Activated CD8-positive, alpha-beta T cell treated with anti-CD3 and anti-CD28 coated beads for 36 hours (primary cell): ENCODE measurements at regions of chr12 and their contacts with region 1.

Region 1: GRCh38 chr12:89542912-89543592 is 17.2 kb upstream of the POC1B start:
- DNase-seq: peak; percentile 80
- ATAC-seq: peak; percentile 86
- H3K4me3 Mint-ChIP-seq: no peak overlapping the region
- H3K27ac Mint-ChIP-seq: no peak overlapping the region
- H3K4me1 Mint-ChIP-seq: peaks cover 6% of the 10 kb centered on the region
- H3K27me3 Mint-ChIP-seq: no peaks in the 10 kb centered on the region
- CTCF ChIP-seq: peak; percentile 81

Region 2: DNA sequence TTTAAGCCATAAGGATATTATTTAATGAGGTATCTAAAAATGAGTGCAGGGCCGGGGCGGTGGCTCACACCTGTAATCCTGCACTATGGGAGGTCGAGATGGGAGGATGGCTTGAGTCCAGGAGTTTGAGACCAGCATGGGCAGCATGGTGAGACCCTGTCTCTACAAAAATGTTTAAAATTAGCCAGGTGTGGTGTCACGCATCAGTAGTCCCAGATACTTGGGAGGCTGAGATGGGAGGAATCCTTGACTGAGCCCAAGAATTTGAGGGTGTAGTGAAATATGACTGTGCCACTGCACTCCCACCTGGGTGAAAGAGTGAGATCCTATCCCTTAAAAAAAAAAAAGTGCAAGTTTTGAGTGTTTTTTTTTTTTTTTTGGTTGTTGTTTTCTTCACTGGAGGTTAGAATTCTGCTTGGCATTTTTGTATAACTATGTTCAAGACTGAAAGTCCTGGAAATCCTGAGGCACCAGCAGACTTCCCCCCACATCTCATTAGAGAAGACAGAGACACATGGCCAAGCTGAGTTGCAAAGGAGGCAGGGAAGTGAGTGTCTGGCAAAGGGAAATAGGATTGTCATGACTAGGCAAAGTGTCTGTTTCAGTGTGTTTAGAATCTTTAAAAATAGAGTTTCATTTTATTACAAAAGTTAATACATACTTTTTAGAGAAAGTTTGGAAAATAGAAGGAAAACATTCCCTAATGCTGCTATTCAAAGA is 137.3 kb before region 1 on chr12:
- CTCF ChIA-PET with region 1: no interaction called
- POLR2A ChIA-PET with region 1: no interaction called
- intact Hi-C with region 1: no loop called
- DNase-seq: no peak
- ATAC-seq: no peak
- H3K4me3 Mint-ChIP-seq: no peak overlapping the region
- H3K27ac Mint-ChIP-seq: no peak overlapping the region
- H3K4me1 Mint-ChIP-seq: no peaks in the 10 kb centered on the region
- H3K27me3 Mint-ChIP-seq: no peaks in the 10 kb centered on the region
- CTCF ChIP-seq: no peak

Region 3: GRCh38 chr12:89556976-89557375 is 13.9 kb after region 1 on chr12:
- CTCF ChIA-PET with region 1: interaction called, 18 read pairs
- POLR2A ChIA-PET with region 1: interaction called, 3 read pairs
- intact Hi-C with region 1: no loop called
- DNase-seq: no peak
- ATAC-seq: no peak
- H3K4me3 Mint-ChIP-seq: no peak overlapping the region
- H3K27ac Mint-ChIP-seq: no peak overlapping the region
- H3K4me1 Mint-ChIP-seq: peaks cover 3% of the 10 kb centered on the region
- H3K27me3 Mint-ChIP-seq: peaks cover 3% of the 10 kb centered on the region
- CTCF ChIP-seq: no peak

Region 4: GRCh38 chr12:89621521-89621920 is 78.5 kb after region 1 on chr12:
- CTCF ChIA-PET with region 1: interaction called, 14 read pairs
- POLR2A ChIA-PET with region 1: no interaction called
- intact Hi-C with region 1: no loop called
- DNase-seq: no peak
- ATAC-seq: no peak
- H3K4me3 Mint-ChIP-seq: no peak overlapping the region
- H3K27ac Mint-ChIP-seq: no peak overlapping the region
- H3K4me1 Mint-ChIP-seq: peaks cover 11% of the 10 kb centered on the region
- H3K27me3 Mint-ChIP-seq: no peaks in the 10 kb centered on the region
- CTCF ChIP-seq: no peak

Region 5: GRCh38 chr12:89709157-89709994 is 166.3 kb after region 1 on chr12:
- CTCF ChIA-PET with region 1: interaction called, 14 read pairs
- POLR2A ChIA-PET with region 1: no interaction called
- intact Hi-C with region 1: no loop called
- DNase-seq: peak; percentile 98
- ATAC-seq: peak; percentile 86
- H3K4me3 Mint-ChIP-seq: peak overlapping the region; percentile 82
- H3K27ac Mint-ChIP-seq: peak overlapping the region; percentile 81
- H3K4me1 Mint-ChIP-seq: peaks cover 31% of the 10 kb centered on the region
- H3K27me3 Mint-ChIP-seq: no peaks in the 10 kb centered on the region
- CTCF ChIP-seq: no peak

Region 6: DNA sequence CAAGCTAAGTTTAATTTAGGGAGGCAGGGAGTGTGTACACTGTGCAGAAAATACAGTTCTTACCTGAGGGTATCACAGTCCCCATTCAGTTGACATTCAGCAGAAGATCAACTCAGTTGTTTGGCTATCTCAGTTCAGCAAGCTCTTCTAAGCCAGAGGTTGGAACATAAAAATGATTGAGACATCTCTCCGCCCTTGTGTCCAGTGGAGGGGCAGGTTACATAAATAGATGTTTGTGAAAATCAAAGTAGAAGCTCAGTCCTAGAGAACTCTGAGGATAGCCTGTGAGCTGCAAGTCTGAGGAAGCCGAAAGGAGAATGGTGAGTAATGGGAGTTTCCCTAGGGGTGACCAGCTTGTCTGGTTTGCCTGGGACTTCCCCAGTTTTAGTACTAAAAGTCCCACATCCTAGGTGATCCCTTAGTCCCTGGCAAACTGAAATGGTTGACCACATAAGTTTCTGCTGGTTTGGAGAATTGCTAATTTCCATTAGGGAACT is 417.0 kb after region 1 on chr12:
- CTCF ChIA-PET with region 1: interaction called, 7 read pairs
- POLR2A ChIA-PET with region 1: no interaction called
- intact Hi-C with region 1: loop called (anchors 5 kb)
- DNase-seq: peak; percentile 47
- ATAC-seq: peak; percentile 93
- H3K4me3 Mint-ChIP-seq: no peak overlapping the region
- H3K27ac Mint-ChIP-seq: no peak overlapping the region
- H3K4me1 Mint-ChIP-seq: peaks cover 17% of the 10 kb centered on the region
- H3K27me3 Mint-ChIP-seq: no peaks in the 10 kb centered on the region
- CTCF ChIP-seq: no peak

Region 7: GRCh38 chr12:90102957-90103652 is 560.1 kb after region 1 on chr12:
- CTCF ChIA-PET with region 1: interaction called, 26 read pairs
- POLR2A ChIA-PET with region 1: no interaction called
- intact Hi-C with region 1: loop called (anchors 5 kb)
- DNase-seq: peak; percentile 39
- ATAC-seq: peak; percentile 71
- H3K4me3 Mint-ChIP-seq: no peak overlapping the region
- H3K27ac Mint-ChIP-seq: no peak overlapping the region
- H3K4me1 Mint-ChIP-seq: peaks cover 13% of the 10 kb centered on the region
- H3K27me3 Mint-ChIP-seq: peaks cover 2% of the 10 kb centered on the region
- CTCF ChIP-seq: peak; percentile 52

Region 8: DNA sequence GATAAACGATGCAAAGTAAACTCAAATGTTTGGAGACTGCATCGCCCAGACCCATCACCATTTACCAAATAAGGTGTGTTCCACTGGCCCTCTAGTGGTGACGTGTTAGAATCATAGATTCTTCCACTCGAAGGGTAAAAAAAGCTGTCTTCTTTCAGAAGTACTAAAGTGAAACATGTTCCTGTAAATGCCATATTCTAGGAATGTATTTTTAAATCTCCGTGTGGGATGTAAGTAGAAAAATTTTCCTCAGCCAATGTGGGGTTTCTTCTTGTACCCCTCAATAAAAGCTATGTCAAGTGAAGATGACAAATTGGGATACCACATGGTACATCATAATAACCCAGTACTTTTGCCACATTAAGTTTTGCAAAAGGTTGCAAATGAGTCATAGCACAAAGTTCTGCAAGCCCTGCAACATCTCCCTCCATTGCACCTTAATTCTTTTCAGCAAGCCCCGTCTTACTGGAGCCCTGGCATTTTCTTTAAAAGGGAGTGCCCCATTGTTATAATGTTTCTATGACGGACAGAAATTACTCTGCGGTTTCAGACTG is 1311.2 kb after region 1 on chr12:
- CTCF ChIA-PET with region 1: interaction called, 4 read pairs
- POLR2A ChIA-PET with region 1: no interaction called
- intact Hi-C with region 1: loop called (anchors 5 kb)
- DNase-seq: peak; percentile 11
- ATAC-seq: peak; percentile 53
- H3K4me3 Mint-ChIP-seq: no peak overlapping the region
- H3K27ac Mint-ChIP-seq: no peak overlapping the region
- H3K4me1 Mint-ChIP-seq: no peaks in the 10 kb centered on the region
- H3K27me3 Mint-ChIP-seq: no peaks in the 10 kb centered on the region
- CTCF ChIP-seq: peak; percentile 69